ENCODE measurements at regions of chr11 and their contacts with region 1.

Region 1: GRCh38 chr11:61516675-61517572 is 8.4 kb downstream of the LRRC10B start:
- DNase-seq: peak; percentile 22
- H3K4me3 Mint-ChIP-seq: peak overlapping the region; percentile 8
- H3K27ac Mint-ChIP-seq: no peak overlapping the region
- H3K4me1 Mint-ChIP-seq: peaks cover 4% of the 10 kb centered on the region
- H3K27me3 Mint-ChIP-seq: peaks cover 4% of the 10 kb centered on the region

Region 2: GRCh38 chr11:61446211-61446651 is 70.7 kb before region 1 on chr11:
- intact Hi-C with region 1: loop called (anchors 1 kb)
- DNase-seq: peak; percentile 72
- H3K4me3 Mint-ChIP-seq: no peak overlapping the region
- H3K27ac Mint-ChIP-seq: peak overlapping the region; percentile 49
- H3K4me1 Mint-ChIP-seq: peaks cover 32% of the 10 kb centered on the region
- H3K27me3 Mint-ChIP-seq: no peaks in the 10 kb centered on the region

Region 3: DNA sequence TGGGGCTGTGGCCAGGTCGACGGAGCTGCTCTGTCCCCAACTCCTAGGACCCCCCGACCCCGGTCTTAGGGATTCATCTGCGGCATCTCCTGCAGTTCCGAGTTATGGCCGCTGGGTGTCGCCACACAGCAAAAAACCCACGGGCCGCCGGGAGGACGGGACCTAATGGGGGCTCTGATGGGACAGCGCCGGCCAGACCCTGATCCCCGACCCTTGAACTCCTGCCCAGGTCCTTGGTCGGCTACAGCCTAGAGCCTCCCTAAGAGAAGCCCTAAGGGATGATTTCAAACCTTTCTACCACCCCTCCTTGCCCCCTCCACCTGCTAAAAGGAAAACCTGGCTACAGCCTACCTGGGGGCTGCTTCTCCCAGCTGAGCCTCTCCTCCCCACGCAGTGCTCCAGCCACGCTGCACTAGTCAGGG is 39.2 kb before region 1 on chr11:
- intact Hi-C with region 1: loop called (anchors 1 kb)
- DNase-seq: peak; percentile 22
- H3K4me3 Mint-ChIP-seq: no peak overlapping the region
- H3K27ac Mint-ChIP-seq: no peak overlapping the region
- H3K4me1 Mint-ChIP-seq: peaks cover 12% of the 10 kb centered on the region
- H3K27me3 Mint-ChIP-seq: no peaks in the 10 kb centered on the region

Region 4: DNA sequence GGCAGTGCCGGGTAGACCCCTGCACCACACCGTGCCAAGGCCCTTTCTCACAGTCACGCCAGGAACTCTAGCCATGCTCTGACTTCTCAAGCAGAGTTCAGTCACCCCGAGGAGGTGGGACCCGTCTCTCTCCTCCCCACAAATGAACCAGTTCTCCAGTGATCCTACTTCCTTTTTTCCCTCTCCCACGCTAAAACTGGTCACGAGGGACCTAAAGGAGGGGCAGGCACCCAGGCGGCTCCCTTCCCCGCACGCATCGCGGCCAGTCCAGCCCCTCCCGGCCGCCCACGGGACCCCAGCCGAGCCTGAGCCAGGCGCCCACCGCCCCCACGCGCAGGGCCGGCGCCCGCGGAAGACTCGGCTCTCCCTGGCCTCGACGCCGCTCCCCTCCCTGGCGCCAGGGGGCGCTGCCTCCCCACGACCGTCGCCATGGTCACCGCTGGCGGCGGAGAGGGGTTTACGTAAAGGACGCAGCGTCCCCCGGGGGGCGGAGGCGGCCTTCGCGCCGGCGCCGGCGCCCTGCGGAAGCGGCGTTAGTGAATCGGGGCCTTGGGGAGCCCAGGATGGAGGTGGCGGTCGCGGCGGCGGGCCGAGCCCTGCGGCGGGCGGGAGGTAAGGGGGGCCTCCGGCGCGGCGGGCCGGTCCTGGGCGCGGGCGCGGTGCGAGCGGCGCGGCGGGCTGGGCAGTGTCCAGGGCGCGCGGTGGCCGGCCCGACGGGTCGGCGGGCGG is 163.1 kb after region 1 on chr11 and contains the start of gene DAGLA:
- intact Hi-C with region 1: no loop called
- DNase-seq: peak; percentile 64
- H3K4me3 Mint-ChIP-seq: peak within 1 kb of the TSS; percentile 40
- H3K27ac Mint-ChIP-seq: no peak within 1 kb of the TSS
- H3K4me1 Mint-ChIP-seq: no peaks in the 10 kb centered on the region
- H3K27me3 Mint-ChIP-seq: peaks cover 12% of the 10 kb centered on the region
- total RNA-seq, gene DAGLA: 0.07 TPM in 2 replicates